GM13977 (cell line): ENCODE measurements at regions of chr1 and their contacts with region 1.

Region 1: DNA sequence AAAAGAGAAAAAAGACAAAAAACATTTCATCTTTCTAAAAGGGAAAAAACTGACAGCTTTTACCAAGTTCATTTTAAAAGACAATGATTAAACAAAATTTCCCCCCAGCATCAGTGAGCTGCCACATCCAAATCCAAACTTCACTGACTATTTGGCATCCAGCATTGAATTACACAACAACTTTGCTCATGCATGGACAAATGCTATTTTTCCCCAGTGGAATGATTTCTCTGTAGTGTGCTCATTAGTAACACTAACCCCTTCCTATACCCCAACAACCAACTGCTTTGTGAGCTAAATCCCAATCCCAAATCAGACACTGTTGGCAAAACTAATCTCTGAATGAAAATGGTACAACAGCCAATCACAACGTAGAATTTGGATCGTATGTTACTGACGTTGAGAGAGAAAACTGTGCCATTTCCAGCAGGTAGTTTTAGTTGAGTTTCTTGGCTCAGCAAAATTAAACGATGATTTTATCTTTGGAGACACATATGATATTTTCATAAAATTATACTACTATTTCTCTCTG is 37.9 kb downstream of the PIK3R3 start:
- DNase-seq: no peak
- CTCF ChIP-seq: no peak

Region 2: DNA sequence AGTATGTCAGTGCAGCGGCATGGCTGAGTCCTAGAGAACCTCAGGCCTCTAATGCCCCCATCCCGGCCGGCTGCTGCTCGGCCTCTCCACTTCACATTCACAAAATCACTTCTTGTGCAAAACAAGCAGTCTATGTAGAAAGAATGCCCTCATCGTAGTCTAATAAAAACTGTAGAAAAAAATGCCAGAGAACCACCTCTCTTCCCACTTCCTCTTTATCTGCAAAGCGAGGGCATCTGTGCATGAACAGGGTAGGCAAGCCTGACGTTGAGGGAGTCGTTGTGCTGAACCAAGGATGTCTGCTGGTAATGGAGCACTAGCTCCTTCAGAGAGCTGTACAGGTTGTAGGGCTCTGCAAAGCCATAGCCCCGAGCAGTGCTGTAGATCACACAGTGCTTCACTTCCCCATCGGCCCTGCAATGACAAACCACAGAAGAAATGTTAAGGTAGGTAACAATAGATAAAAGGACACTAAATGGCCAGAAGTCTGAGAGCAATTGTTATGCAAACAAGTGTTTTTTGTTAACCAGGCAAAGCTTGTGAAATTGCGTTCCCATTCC is 51.0 kb before region 1 on chr1:
- in situ Hi-C with region 1: loop called (anchors 10 kb)
- DNase-seq: no peak
- CTCF ChIP-seq: no peak